ENCODE measurements at regions of chr2 and their contacts with region 1.

Region 1: GRCh38 chr2:174697255-174697654 is 67.0 kb downstream of the CHRNA1 start:
- DNase-seq: peak; percentile 27 to 70 (median 37)
- H3K4me3 ChIP-seq: no peak overlapping the region
- H3K4me3 Mint-ChIP-seq: no peak overlapping the region
- H3K27ac ChIP-seq: no peak overlapping the region
- H3K27ac Mint-ChIP-seq: no peak overlapping the region
- H3K4me1 ChIP-seq: no peaks in the 10 kb centered on the region
- H3K4me1 Mint-ChIP-seq: peaks cover 0 to 8% (median 5%) of the 10 kb centered on the region in 3 donors
- H3K27me3 ChIP-seq: no peaks in the 10 kb centered on the region
- H3K27me3 Mint-ChIP-seq: peaks cover 0 to 9% of the 10 kb centered on the region in 2 donors

Region 2: DNA sequence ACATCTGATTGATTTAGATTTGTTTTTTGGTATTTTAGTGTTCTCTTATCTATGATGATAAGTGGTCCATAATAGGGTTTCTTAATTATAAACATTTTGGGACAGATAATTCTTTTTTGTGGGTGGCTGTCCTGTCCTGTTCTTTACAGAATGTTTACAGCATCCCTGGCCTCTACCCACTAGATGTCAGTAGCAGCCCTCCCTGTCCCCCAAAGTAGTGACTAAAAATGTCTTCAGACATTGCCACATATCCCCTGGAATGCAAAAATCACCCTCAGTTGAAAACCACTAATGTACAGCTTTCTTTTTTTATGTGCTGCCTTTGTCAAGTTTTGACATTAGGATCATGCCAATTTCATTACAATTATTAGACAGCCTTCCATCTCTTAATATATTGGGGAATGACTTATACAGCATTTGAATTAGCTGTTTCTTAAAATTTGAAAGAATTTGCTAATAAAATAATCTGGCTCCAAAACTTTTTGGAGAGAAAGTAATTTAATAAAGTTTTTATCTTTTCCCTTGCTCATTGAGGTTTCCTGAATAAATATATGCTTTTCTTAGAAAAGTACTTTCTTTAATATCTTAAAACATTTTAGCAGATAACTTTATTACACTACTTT is 119.2 kb before region 1 on chr2:
- CTCF ChIA-PET with region 1: interaction called, 12 read pairs
- POLR2A ChIA-PET with region 1: no interaction called
- DNase-seq: peak; percentile 34 to 73 (median 64)
- H3K4me3 ChIP-seq: no peak overlapping the region
- H3K4me3 Mint-ChIP-seq: peak overlapping the region in 1 of 7 donors; percentile 15
- H3K27ac ChIP-seq: no peak overlapping the region
- H3K27ac Mint-ChIP-seq: peak overlapping the region; percentile 43 to 89 (median 77)
- H3K4me1 ChIP-seq: peaks cover 65% of the 10 kb centered on the region
- H3K4me1 Mint-ChIP-seq: peaks cover 80 to 96% (median 93%) of the 10 kb centered on the region in 3 donors
- H3K27me3 ChIP-seq: no peaks in the 10 kb centered on the region
- H3K27me3 Mint-ChIP-seq: no peaks in the 10 kb centered on the region

Region 3: GRCh38 chr2:174717273-174717672 is 20.0 kb after region 1 on chr2:
- CTCF ChIA-PET with region 1: interaction called, 16 read pairs
- POLR2A ChIA-PET with region 1: no interaction called
- DNase-seq: peak in 2 of 5 donors; percentile 48 to 66
- H3K4me3 ChIP-seq: peak overlapping the region; percentile 15
- H3K4me3 Mint-ChIP-seq: peak overlapping the region; percentile 11 to 90 (median 69)
- H3K27ac ChIP-seq: no peak overlapping the region
- H3K27ac Mint-ChIP-seq: peak overlapping the region; percentile 14 to 72 (median 44)
- H3K4me1 ChIP-seq: peaks cover 28% of the 10 kb centered on the region
- H3K4me1 Mint-ChIP-seq: peaks cover 28 to 33% (median 32%) of the 10 kb centered on the region in 3 donors
- H3K27me3 ChIP-seq: no peaks in the 10 kb centered on the region
- H3K27me3 Mint-ChIP-seq: no peaks in the 10 kb centered on the region

Region 4: GRCh38 chr2:174748948-174749347 is 51.7 kb after region 1 on chr2:
- CTCF ChIA-PET with region 1: interaction called, 32 read pairs
- POLR2A ChIA-PET with region 1: no interaction called
- DNase-seq: peak; percentile 54 to 78 (median 63)
- H3K4me3 ChIP-seq: no peak overlapping the region
- H3K4me3 Mint-ChIP-seq: peak overlapping the region in 1 of 7 donors; percentile 13
- H3K27ac ChIP-seq: no peak overlapping the region
- H3K27ac Mint-ChIP-seq: peak overlapping the region in 7 of 8 donors; percentile 13 to 92 (median 88)
- H3K4me1 ChIP-seq: peaks cover 37% of the 10 kb centered on the region
- H3K4me1 Mint-ChIP-seq: peaks cover 39 to 50% (median 50%) of the 10 kb centered on the region in 3 donors
- H3K27me3 ChIP-seq: no peaks in the 10 kb centered on the region
- H3K27me3 Mint-ChIP-seq: no peaks in the 10 kb centered on the region

Region 5: GRCh38 chr2:174985630-174986029 is 288.4 kb after region 1 on chr2:
- CTCF ChIA-PET with region 1: interaction called, 24 read pairs
- POLR2A ChIA-PET with region 1: no interaction called
- DNase-seq: no peak
- H3K4me3 ChIP-seq: no peak overlapping the region
- H3K4me3 Mint-ChIP-seq: no peak overlapping the region
- H3K27ac ChIP-seq: no peak overlapping the region
- H3K27ac Mint-ChIP-seq: no peak overlapping the region
- H3K4me1 ChIP-seq: no peaks in the 10 kb centered on the region
- H3K4me1 Mint-ChIP-seq: peaks cover 0 to 9% (median 8%) of the 10 kb centered on the region in 3 donors
- H3K27me3 ChIP-seq: no peaks in the 10 kb centered on the region
- H3K27me3 Mint-ChIP-seq: peaks cover 2 to 11% of the 10 kb centered on the region in 2 donors